CD8-positive, alpha-beta memory T cell (primary cell): ENCODE measurements at regions of chr4 and their contacts with region 1.

Region 1: DNA sequence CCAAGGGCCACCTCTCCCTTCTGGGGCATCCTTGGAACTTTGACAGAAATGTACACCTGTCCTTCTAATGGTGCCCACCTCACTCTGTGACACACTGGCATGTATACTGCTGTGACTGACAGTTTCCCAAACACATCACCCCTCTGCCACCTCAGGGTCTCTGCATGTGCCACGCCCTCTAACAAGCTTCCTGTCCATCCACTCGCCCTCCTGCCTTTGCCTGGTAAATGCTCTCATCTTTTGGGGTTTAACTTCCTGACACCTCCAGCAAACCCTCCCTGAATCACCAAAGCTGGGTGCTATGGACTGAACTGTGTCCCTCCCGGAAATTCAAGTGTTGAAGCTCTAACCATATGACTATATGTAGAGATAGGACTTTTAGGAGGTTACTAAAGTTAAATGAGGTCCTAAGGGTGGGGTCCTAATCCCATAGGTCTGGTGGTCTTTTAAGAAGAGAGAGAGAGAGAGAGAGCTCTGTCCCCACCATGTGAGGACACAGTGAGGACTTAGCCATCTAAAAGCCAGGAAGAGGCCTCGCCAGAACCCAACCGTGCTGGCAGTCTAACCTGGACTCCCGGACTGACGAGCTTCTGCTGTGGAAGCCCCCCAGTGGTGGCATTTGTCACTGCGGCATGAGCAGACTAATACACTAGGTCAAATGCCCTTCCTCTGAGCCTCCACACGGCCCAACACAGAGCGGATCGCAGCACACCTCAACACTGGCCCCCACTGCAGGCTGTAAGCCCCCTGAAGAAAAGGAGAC is 95.6 kb downstream of the AFAP1 start:
- DNase-seq: peak; percentile 37 to 78 (median 57)
- H3K4me3 ChIP-seq: no peak overlapping the region
- H3K4me3 Mint-ChIP-seq: peak overlapping the region in 1 of 7 donors; percentile 52
- H3K27ac ChIP-seq: no peak overlapping the region
- H3K27ac Mint-ChIP-seq: peak overlapping the region in 5 of 8 donors; percentile 48 to 89 (median 75)
- H3K4me1 ChIP-seq: peaks cover 10% of the 10 kb centered on the region
- H3K4me1 Mint-ChIP-seq: peaks cover 14 to 25% (median 25%) of the 10 kb centered on the region in 3 donors
- H3K27me3 ChIP-seq: no peaks in the 10 kb centered on the region
- H3K27me3 Mint-ChIP-seq: peaks cover 0 to 2% of the 10 kb centered on the region in 2 donors

Region 2: GRCh38 chr4:7770224-7771050 is 73.6 kb before region 1 on chr4:
- CTCF ChIA-PET with region 1: no interaction called
- POLR2A ChIA-PET with region 1: no interaction called
- DNase-seq: peak in 1 of 5 donors; percentile 23
- H3K4me3 ChIP-seq: no peak overlapping the region
- H3K4me3 Mint-ChIP-seq: peak overlapping the region in 3 of 7 donors; percentile 25 to 69 (median 51)
- H3K27ac ChIP-seq: no peak overlapping the region
- H3K27ac Mint-ChIP-seq: peak overlapping the region in 6 of 8 donors; percentile 32 to 80 (median 62)
- H3K4me1 ChIP-seq: peaks cover 12% of the 10 kb centered on the region
- H3K4me1 Mint-ChIP-seq: peaks cover 18 to 22% (median 20%) of the 10 kb centered on the region in 3 donors
- H3K27me3 ChIP-seq: no peaks in the 10 kb centered on the region
- H3K27me3 Mint-ChIP-seq: no peaks in the 10 kb centered on the region

Region 3: GRCh38 chr4:7827991-7828720 is 15.9 kb before region 1 on chr4:
- CTCF ChIA-PET with region 1: interaction called, 10 read pairs
- POLR2A ChIA-PET with region 1: interaction called, 7 read pairs
- DNase-seq: peak; percentile 23 to 87 (median 59)
- H3K4me3 ChIP-seq: peak overlapping the region; percentile 30
- H3K4me3 Mint-ChIP-seq: peak overlapping the region; percentile 37 to 86 (median 73)
- H3K27ac ChIP-seq: peak overlapping the region; percentile 45
- H3K27ac Mint-ChIP-seq: peak overlapping the region; percentile 91 to 97 (median 92)
- H3K4me1 ChIP-seq: peaks cover 34% of the 10 kb centered on the region
- H3K4me1 Mint-ChIP-seq: peaks cover 48 to 68% (median 68%) of the 10 kb centered on the region in 3 donors
- H3K27me3 ChIP-seq: no peaks in the 10 kb centered on the region
- H3K27me3 Mint-ChIP-seq: peaks cover 0 to 5% of the 10 kb centered on the region in 2 donors

Region 4: GRCh38 chr4:7854697-7855370 is 10.8 kb after region 1 on chr4:
- CTCF ChIA-PET with region 1: interaction called, 11 read pairs
- POLR2A ChIA-PET with region 1: no interaction called
- DNase-seq: peak; percentile 56 to 88 (median 74)
- H3K4me3 ChIP-seq: peak overlapping the region; percentile 53
- H3K4me3 Mint-ChIP-seq: peak overlapping the region; percentile 55 to 73 (median 69)
- H3K27ac ChIP-seq: peak overlapping the region; percentile 76
- H3K27ac Mint-ChIP-seq: peak overlapping the region; percentile 79 to 97 (median 94)
- H3K4me1 ChIP-seq: peaks cover 80% of the 10 kb centered on the region
- H3K4me1 Mint-ChIP-seq: peaks cover 47 to 84% (median 67%) of the 10 kb centered on the region in 3 donors
- H3K27me3 ChIP-seq: no peaks in the 10 kb centered on the region
- H3K27me3 Mint-ChIP-seq: peaks cover 0 to 2% of the 10 kb centered on the region in 2 donors

Region 5: DNA sequence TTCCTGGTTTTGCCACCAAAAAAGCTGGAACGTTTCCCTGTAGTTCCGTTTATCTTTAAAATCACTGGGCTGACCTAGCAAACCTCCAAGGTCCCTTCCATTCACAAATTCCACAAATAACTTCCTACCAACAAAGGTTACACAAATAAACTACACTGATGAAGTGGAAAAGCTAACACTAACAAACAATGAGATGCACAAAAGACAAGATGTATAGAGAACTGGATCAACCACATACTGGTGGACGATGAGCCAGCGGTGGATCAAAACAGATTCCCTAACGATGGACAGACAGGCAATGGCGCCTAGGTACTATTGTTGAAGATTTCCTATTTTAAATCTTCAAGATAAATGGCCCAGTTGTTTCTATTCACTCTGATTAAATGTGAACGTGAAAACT is 80.2 kb after region 1 on chr4:
- CTCF ChIA-PET with region 1: no interaction called
- POLR2A ChIA-PET with region 1: no interaction called
- DNase-seq: no peak
- H3K4me3 ChIP-seq: no peak overlapping the region
- H3K4me3 Mint-ChIP-seq: no peak overlapping the region
- H3K27ac ChIP-seq: no peak overlapping the region
- H3K27ac Mint-ChIP-seq: no peak overlapping the region
- H3K4me1 ChIP-seq: no peaks in the 10 kb centered on the region
- H3K4me1 Mint-ChIP-seq: peaks cover 6 to 10% (median 10%) of the 10 kb centered on the region in 3 donors
- H3K27me3 ChIP-seq: no peaks in the 10 kb centered on the region
- H3K27me3 Mint-ChIP-seq: peaks cover 0 to 4% of the 10 kb centered on the region in 2 donors

Region 6: DNA sequence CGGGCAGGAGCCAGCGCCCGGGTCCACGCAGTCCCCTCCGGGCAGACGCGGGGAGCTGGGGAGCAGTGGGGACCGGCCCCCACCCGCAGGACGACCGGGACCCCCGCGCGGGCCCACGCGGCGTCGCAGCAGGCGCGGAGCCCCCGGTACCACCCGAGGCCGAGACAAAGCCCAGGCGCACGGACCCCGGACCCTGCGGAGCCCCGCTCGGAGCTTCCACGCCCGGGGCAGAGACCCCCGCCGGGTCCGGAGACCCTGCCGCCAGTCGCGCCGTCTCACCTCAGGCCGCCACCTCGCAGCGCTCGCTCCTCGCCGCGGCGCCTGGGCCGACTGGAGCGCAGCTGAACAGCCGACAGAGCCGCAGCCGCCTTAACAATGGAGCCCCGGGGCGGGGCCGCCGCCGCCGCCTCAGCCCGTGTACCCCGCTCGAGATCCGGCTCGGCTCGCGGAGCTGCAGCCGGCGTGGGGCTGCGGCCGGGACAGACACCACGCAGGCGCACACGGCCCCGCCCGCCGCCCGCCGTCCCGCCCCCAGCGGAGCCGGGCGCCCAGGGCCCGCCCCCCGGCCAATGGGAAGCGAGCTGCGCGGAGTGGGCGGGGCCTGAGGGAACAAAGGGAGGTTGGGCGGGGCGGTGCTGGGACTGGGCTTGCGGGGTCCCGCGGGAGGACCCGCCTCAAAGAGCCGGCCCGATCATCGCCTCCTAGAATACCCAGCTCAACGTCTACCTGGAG is 95.5 kb after region 1 on chr4 and contains the start of gene AFAP1:
- CTCF ChIA-PET with region 1: interaction called, 11 read pairs
- POLR2A ChIA-PET with region 1: no interaction called
- DNase-seq: peak; percentile 85 to 91 (median 86)
- H3K4me3 ChIP-seq: peak within 1 kb of the TSS; percentile 61
- H3K4me3 Mint-ChIP-seq: peak within 1 kb of the TSS; percentile 58 to 95 (median 75)
- H3K27ac ChIP-seq: peak within 1 kb of the TSS; percentile 31
- H3K27ac Mint-ChIP-seq: peak within 1 kb of the TSS in 3 of 8 donors; percentile 20 to 81 (median 50)
- H3K4me1 ChIP-seq: peaks cover 20% of the 10 kb centered on the region
- H3K4me1 Mint-ChIP-seq: peaks cover 18 to 32% (median 24%) of the 10 kb centered on the region in 3 donors
- H3K27me3 ChIP-seq: no peaks in the 10 kb centered on the region
- H3K27me3 Mint-ChIP-seq: peaks cover 4 to 9% of the 10 kb centered on the region in 2 donors
- total RNA-seq, gene AFAP1: 18.4 to 19.9 TPM

Region 7: GRCh38 chr4:7987148-7987989 is 143.4 kb after region 1 on chr4:
- CTCF ChIA-PET with region 1: interaction called, 10 read pairs
- POLR2A ChIA-PET with region 1: no interaction called
- DNase-seq: peak; percentile 53 to 78 (median 62)
- H3K4me3 ChIP-seq: no peak overlapping the region
- H3K4me3 Mint-ChIP-seq: no peak overlapping the region
- H3K27ac ChIP-seq: no peak overlapping the region
- H3K27ac Mint-ChIP-seq: peak overlapping the region in 1 of 8 donors; percentile 68
- H3K4me1 ChIP-seq: peaks cover 4% of the 10 kb centered on the region
- H3K4me1 Mint-ChIP-seq: peaks cover 1 to 5% (median 4%) of the 10 kb centered on the region in 3 donors
- H3K27me3 ChIP-seq: no peaks in the 10 kb centered on the region
- H3K27me3 Mint-ChIP-seq: peaks cover 5% of the 10 kb centered on the region in 2 donors